Activated T-helper 2 cell treated with anti-CD3 and anti-CD28 coated beads, Interferon-gamma antibody, Interleukin-2, Interleukin-4, amounts not matched to agents 10 μg/mL and 5 μg/mL and 100 μg/mL, durations not matched to agents 14 hours and 24 hours and 36 hours (primary cell): ENCODE measurements at regions of chr2 and their contacts with region 1.

Region 1: GRCh38 chr2:108637304-108637669 is 82.0 kb upstream of the RANBP2 start:
- DNase-seq: no peak
- H3K4me3 Mint-ChIP-seq: no peak overlapping the region
- H3K27ac Mint-ChIP-seq: peak overlapping the region; percentile 71
- H3K4me1 Mint-ChIP-seq: peaks cover 53% of the 10 kb centered on the region
- H3K27me3 Mint-ChIP-seq: no peaks in the 10 kb centered on the region

Region 2: GRCh38 chr2:108533832-108534583 is 103.3 kb before region 1 on chr2 and contains the start of gene LIMS1:
- intact Hi-C with region 1: loop called (anchors 5 kb)
- DNase-seq: peak; percentile 77
- H3K4me3 Mint-ChIP-seq: peak within 1 kb of the TSS; percentile 96
- H3K27ac Mint-ChIP-seq: peak within 1 kb of the TSS; percentile 97
- H3K4me1 Mint-ChIP-seq: peaks cover 52% of the 10 kb centered on the region
- H3K27me3 Mint-ChIP-seq: no peaks in the 10 kb centered on the region
- total RNA-seq, gene LIMS1: 48.4 and 49.1 TPM in 2 replicates

Region 3: GRCh38 chr2:108560241-108560811 is 77.0 kb before region 1 on chr2:
- intact Hi-C with region 1: no loop called
- DNase-seq: no peak
- H3K4me3 Mint-ChIP-seq: no peak overlapping the region
- H3K27ac Mint-ChIP-seq: no peak overlapping the region
- H3K4me1 Mint-ChIP-seq: peaks cover 5% of the 10 kb centered on the region
- H3K27me3 Mint-ChIP-seq: no peaks in the 10 kb centered on the region

Region 4: GRCh38 chr2:108594132-108594981 is 42.9 kb before region 1 on chr2:
- intact Hi-C with region 1: loop called (anchors 1 kb)
- DNase-seq: no peak
- H3K4me3 Mint-ChIP-seq: peak overlapping the region; percentile 75
- H3K27ac Mint-ChIP-seq: peak overlapping the region; percentile 91
- H3K4me1 Mint-ChIP-seq: peaks cover 58% of the 10 kb centered on the region
- H3K27me3 Mint-ChIP-seq: no peaks in the 10 kb centered on the region

Region 5: DNA sequence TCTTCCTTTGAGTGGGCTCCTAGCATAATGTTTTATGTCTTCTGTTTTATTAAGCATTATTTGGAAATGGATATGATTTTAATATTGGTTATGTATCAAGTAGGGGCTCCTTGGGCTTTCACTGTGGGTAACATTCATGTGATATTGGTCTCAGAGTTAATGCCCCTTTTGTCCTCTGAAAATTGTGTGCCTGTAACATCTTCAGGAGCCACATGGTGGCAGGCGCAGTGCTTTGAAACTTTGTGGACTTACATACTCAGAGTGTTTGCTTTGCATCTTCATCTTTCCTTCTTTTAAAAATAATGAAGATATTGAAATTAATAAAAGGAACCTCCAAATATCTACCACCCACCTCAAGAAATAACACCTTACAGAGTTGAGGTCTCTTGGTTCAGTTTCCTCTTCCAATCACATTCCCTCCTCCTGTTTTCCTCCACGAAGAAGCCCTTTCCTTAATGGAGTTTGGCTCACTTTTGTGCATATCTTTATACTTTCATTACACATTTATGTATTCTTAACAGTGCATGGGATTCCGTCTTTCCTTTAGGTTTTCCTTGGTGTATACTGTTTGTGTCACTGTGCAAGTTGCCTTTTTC is 29.5 kb before region 1 on chr2:
- intact Hi-C with region 1: loop called (anchors 1 kb)
- DNase-seq: no peak
- H3K4me3 Mint-ChIP-seq: no peak overlapping the region
- H3K27ac Mint-ChIP-seq: no peak overlapping the region
- H3K4me1 Mint-ChIP-seq: peaks cover 70% of the 10 kb centered on the region
- H3K27me3 Mint-ChIP-seq: no peaks in the 10 kb centered on the region

Region 6: GRCh38 chr2:108621087-108621559 is 16.2 kb before region 1 on chr2:
- intact Hi-C with region 1: loop called (anchors 1 kb)
- DNase-seq: peak; percentile 74
- H3K4me3 Mint-ChIP-seq: peak overlapping the region; percentile 90
- H3K27ac Mint-ChIP-seq: peak overlapping the region; percentile 97
- H3K4me1 Mint-ChIP-seq: peaks cover 74% of the 10 kb centered on the region
- H3K27me3 Mint-ChIP-seq: no peaks in the 10 kb centered on the region